H1 (cell line): ENCODE measurements at regions of chr1 and their contacts with region 1.

Region 1: GRCh38 chr1:180881806-180882509 is 30.7 kb upstream of the KIAA1614 start:
- DNase-seq: no peak
- H3K4me3 ChIP-seq: no peak overlapping the region
- H3K27ac ChIP-seq: no peak overlapping the region
- H3K4me1 ChIP-seq: no peaks in the 10 kb centered on the region
- H3K27me3 ChIP-seq: no peaks in the 10 kb centered on the region
- CTCF ChIP-seq: peak in 2 of 3 experiments; percentile 48 to 56; a peak in 2 of 4 replicates
- EP300 ChIP-seq: no peak
- POLR2A ChIP-seq: no peak
- RAD21 ChIP-seq: peak; percentile 71 to 79

Region 2: DNA sequence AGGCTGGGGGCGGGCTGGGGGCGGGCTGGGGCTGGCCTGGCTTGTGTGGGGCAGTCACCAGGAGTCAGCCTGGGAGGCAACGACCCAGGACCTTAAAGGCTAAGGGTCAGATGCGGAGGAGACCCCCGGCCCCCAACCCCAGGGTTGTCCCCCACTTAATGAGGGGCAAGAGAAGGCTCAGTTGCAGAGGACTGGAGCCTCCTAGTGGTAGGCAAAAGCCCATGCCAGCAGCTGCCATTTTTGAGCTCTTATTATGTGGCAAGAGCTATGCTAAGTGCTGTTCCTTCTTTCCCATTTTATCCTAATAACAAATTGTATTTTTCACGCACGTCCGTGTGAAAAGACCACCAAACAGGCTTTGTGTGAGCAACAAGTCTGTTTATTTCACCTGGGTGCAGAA is 38.7 kb after region 1 on chr1:
- CTCF ChIA-PET with region 1: interaction called, 28 read pairs
- POLR2A ChIA-PET with region 1: interaction called, 4 read pairs
- DNase-seq: no peak
- H3K4me3 ChIP-seq: no peak overlapping the region
- H3K27ac ChIP-seq: no peak overlapping the region
- H3K4me1 ChIP-seq: peaks cover 24 to 37% (median 33%) of the 10 kb centered on the region in 4 experiments
- H3K27me3 ChIP-seq: no peaks in the 10 kb centered on the region; a peak in 1 of 7 replicates
- CTCF ChIP-seq: peak; percentile 37 to 60 (median 48); a peak in 3 of 4 replicates
- EP300 ChIP-seq: no peak
- POLR2A ChIP-seq: no peak
- RAD21 ChIP-seq: peak; percentile 45 to 59; a peak in 3 of 4 replicates

Region 3: GRCh38 chr1:180947901-180948640 is 66.1 kb after region 1 on chr1:
- CTCF ChIA-PET with region 1: interaction called, 10 read pairs
- POLR2A ChIA-PET with region 1: no interaction called
- DNase-seq: no peak
- H3K4me3 ChIP-seq: no peak overlapping the region
- H3K27ac ChIP-seq: no peak overlapping the region
- H3K4me1 ChIP-seq: peaks cover 0 to 8% (median 2%) of the 10 kb centered on the region in 4 experiments; a peak in 4 of 7 replicates
- H3K27me3 ChIP-seq: no peaks in the 10 kb centered on the region
- CTCF ChIP-seq: no peak
- EP300 ChIP-seq: no peak
- POLR2A ChIP-seq: no peak
- RAD21 ChIP-seq: no peak